ENCODE measurements at regions of chr6 and their contacts with region 1.

Region 1: DNA sequence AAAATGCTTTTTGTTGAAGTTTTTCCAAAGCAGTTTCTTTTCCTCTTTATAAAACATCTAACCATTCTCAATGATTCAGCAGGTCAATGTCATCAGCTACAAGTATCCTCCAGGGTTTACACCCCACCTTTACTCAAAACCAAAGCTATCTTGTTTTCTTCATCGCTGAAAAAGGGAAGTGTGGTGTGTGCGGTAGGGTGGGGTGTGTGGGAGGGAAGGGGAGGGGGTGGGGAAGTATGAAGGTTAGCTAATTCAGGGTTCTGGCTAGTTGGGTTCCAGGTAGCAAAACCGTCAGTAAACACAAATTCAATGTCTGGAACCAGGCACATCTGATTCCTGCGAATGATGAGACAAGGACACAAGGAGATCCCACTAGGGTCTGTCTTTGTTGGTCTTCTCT is 189.6 kb downstream of the GJA10 start:
- DNase-seq: peak; percentile 71
- H3K4me3 Mint-ChIP-seq: peak overlapping the region; percentile 43
- H3K27ac Mint-ChIP-seq: peak overlapping the region; percentile 64
- H3K4me1 Mint-ChIP-seq: peaks cover 75% of the 10 kb centered on the region
- H3K27me3 Mint-ChIP-seq: peaks cover 35% of the 10 kb centered on the region

Region 2: GRCh38 chr6:89999154-89999553 is 84.7 kb before region 1 on chr6:
- CTCF ChIA-PET with region 1: no interaction called
- POLR2A ChIA-PET with region 1: no interaction called
- DNase-seq: peak; percentile 49
- H3K4me3 Mint-ChIP-seq: no peak overlapping the region
- H3K27ac Mint-ChIP-seq: no peak overlapping the region
- H3K4me1 Mint-ChIP-seq: peaks cover 14% of the 10 kb centered on the region
- H3K27me3 Mint-ChIP-seq: no peaks in the 10 kb centered on the region

Region 3: GRCh38 chr6:90103056-90103800 is 19.3 kb after region 1 on chr6:
- CTCF ChIA-PET with region 1: interaction called, 4 read pairs
- POLR2A ChIA-PET with region 1: interaction called, 27 read pairs
- DNase-seq: peak; percentile 60
- H3K4me3 Mint-ChIP-seq: peak overlapping the region; percentile 67
- H3K27ac Mint-ChIP-seq: peak overlapping the region; percentile 61
- H3K4me1 Mint-ChIP-seq: peaks cover 61% of the 10 kb centered on the region
- H3K27me3 Mint-ChIP-seq: peaks cover 19% of the 10 kb centered on the region

Region 4: DNA sequence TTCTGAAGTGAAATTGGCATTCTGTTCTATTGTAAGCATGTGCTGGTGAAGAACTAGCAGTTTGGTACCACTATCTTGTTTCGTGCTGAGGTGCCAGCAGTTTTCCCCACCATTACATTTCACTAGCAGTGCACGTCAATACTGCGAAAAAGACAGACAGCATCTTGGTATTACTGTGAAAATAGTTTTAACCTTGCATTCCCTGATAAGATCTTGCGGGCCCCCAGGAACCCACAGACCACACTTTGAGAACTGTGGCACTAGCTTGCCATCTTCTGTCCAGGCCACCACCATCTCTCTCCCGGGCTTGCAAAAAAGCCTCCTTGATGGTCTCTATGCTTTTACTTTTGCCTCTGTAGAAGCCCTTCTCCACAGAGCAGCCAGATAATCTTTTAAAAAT is 27.1 kb after region 1 on chr6:
- CTCF ChIA-PET with region 1: no interaction called
- POLR2A ChIA-PET with region 1: interaction called, 27 read pairs
- DNase-seq: peak; percentile 88
- H3K4me3 Mint-ChIP-seq: no peak overlapping the region
- H3K27ac Mint-ChIP-seq: peak overlapping the region; percentile 63
- H3K4me1 Mint-ChIP-seq: peaks cover 56% of the 10 kb centered on the region
- H3K27me3 Mint-ChIP-seq: peaks cover 18% of the 10 kb centered on the region

Region 5: DNA sequence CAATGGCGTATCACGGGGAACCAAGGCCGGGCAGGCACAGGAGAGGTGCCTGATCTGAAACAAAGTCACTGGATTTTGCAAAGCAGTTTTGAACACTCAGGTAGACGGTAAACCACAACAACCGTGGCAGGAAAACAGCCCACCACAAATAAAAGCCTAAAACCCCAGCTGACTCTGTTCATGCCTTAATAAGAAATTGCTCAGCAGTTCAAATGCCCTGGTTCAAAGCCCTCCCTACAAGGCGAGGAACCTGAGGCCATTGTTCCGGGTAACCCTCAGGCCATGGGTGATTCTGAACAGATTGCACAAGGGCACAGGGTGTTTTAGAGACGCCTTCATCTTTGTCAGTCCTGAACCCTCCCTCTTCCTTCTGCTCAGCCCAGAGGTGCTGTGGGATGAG is 388.9 kb after region 1 on chr6:
- CTCF ChIA-PET with region 1: interaction called, 7 read pairs
- POLR2A ChIA-PET with region 1: interaction called, 14 read pairs
- DNase-seq: peak; percentile 75
- H3K4me3 Mint-ChIP-seq: peak overlapping the region; percentile 70
- H3K27ac Mint-ChIP-seq: peak overlapping the region; percentile 92
- H3K4me1 Mint-ChIP-seq: peaks cover 98% of the 10 kb centered on the region
- H3K27me3 Mint-ChIP-seq: peaks cover 12% of the 10 kb centered on the region

Measured in activated CD4-positive, alpha-beta memory T cell treated with anti-CD3 and anti-CD28 coated beads, Interleukin-2, amount 10 ng/mL, durations not matched to agents 7 days and 5 days (primary cell).